ENCODE measurements at regions of chr17 and their contacts with region 1.

Region 1: DNA sequence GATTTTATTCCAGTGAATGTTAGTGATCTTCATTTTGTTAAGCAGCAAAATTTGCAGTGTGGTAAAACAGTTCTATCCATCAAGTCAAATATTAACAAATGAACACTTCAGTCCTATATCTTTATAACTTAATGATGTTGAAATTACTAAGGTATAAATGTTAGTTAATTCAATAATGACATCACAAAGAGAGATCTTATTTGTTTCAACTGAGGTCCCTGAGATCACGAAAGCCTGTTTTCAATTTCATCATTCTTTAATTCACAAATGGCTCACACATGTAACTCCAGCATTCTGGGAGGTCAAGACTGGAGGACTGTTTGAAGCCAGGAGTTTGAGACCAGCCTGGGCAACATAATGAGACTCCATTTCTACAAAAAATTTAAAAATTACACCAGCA is 13.9 kb downstream of the SMURF2 start:
- DNase-seq: no peak
- ATAC-seq: no peak
- H3K4me3 ChIP-seq: no peak overlapping the region
- H3K27ac ChIP-seq: no peak overlapping the region
- H3K4me1 ChIP-seq: peaks cover 26% of the 10 kb centered on the region
- H3K27me3 ChIP-seq: no peaks in the 10 kb centered on the region
- CTCF ChIP-seq: no peak

Region 2: GRCh38 chr17:64554028-64554637 is 94.1 kb before region 1 on chr17:
- CTCF ChIA-PET with region 1: no interaction called
- POLR2A ChIA-PET with region 1: no interaction called
- in situ Hi-C with region 1: no loop called
- intact Hi-C with region 1: loop called (anchors 10 kb)
- DNase-seq: no peak
- ATAC-seq: no peak
- H3K4me3 ChIP-seq: no peak overlapping the region
- H3K27ac ChIP-seq: no peak overlapping the region
- H3K4me1 ChIP-seq: no peaks in the 10 kb centered on the region
- H3K27me3 ChIP-seq: no peaks in the 10 kb centered on the region
- CTCF ChIP-seq: no peak

Measured in Panc1 (cell line).